Activated T-helper 1 cell treated with anti-CD3 and anti-CD28 coated beads, Interleukin-12 subunit alpha, Interleukin-12 subunit beta, Interleukin-2, Interleukin-4 antibody, amounts not matched to agents 30 ng/mL and 10 ng/mL and 1 ng/mL, durations not matched to agents 14 hours and 24 hours and 36 hours (primary cell): ENCODE measurements at regions of chr1 and their contacts with region 1.

Region 1: DNA sequence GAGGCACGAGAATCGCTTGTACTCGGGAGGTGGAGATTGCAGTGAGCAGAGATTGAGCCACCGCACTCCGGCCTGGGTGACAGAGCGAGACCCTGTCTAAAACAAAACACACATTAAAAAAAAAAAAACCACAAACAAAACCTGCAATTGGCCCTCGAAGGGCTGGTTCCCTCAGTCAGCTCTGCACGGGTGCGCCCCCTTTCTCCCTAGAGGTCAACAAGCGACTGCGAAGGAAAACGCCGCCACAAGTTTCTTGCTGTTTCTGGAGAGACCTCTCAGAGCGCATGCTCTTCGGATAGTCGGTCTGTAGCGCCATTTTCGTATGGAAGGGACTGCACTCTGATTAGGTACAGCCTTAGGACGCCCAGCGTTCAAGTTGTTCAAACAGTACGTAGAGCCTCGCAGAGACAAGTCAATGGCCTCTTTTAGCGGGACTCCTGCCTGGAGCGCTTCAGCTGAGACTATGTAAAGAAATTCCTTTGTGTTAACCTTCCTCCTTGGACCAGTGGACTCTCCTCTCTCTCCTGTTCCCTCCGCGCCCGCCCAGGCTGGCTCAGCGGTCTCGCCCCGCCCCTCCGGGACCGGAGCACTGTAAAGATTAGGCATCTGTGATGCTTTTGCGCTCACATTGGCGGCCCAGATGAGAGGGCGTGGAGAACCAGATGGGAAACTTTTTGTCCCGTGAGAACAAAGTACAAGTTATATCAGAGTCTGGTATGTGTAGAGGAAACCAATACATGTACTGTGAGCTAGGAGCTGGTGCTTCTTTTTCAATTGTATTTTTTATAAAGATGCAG is 1.0 kb upstream of the CDC14A start:
- DNase-seq: peak; percentile 85
- H3K4me3 Mint-ChIP-seq: peak overlapping the region; percentile 93
- H3K27ac Mint-ChIP-seq: peak overlapping the region; percentile 99
- H3K4me1 Mint-ChIP-seq: peaks cover 42% of the 10 kb centered on the region
- H3K27me3 Mint-ChIP-seq: peaks cover 2% of the 10 kb centered on the region

Region 2: DNA sequence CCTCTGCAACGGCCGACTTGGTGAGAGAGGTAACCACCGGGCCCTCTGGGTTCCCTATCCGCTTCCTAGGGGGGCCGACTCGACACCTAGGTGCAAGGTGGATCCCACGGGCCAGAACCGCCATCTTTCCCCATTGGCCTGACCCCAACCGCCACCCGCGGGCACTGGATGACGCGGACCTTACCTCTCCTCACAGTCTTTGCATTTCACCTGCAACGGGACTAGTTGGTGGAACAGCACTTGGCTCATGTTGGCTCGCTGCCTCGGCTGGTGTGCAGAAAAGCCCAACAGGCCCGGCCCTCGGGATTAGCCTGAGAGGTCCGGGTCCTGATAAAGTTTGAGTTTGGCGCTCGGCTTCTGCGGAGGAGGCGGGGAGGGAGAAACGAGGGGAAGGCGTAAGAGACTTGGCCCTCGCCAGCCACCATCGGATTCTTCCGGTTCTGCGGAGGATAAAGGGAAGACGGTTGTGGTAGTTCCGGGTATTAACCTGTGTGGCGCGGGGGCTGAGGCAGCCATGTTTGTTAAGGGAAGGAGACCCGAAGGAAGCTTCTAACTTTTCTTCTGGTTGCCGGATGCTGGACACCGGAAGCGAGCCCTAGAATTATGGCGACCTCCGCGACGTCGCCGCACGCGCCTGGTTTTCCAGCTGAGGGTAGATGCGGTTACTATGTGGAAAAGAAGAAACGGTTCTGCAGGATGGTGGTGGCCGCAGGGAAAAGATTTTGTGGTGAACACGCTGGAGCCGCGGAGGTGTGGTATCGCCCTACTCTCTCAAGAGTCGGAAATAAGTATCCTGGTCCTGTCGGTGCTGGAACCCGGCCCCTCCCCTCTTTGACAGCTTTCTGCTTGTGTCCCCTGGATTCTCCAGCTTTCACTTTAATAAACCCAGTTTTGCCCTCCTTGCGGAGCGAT is 218.5 kb before region 1 on chr1 and contains the starts of genes SASS6 and TRMT13:
- intact Hi-C with region 1: loop called (anchors 1 kb)
- DNase-seq: peak; percentile 93
- H3K4me3 Mint-ChIP-seq: peak within 1 kb of the TSS; percentile 99
- H3K27ac Mint-ChIP-seq: peak within 1 kb of the TSS; percentile 98
- H3K4me1 Mint-ChIP-seq: peaks cover 56% of the 10 kb centered on the region
- H3K27me3 Mint-ChIP-seq: no peaks in the 10 kb centered on the region
- total RNA-seq, gene SASS6: 16.4 and 16.7 TPM in 2 replicates
- total RNA-seq, gene TRMT13: 21.8 and 25.0 TPM in 2 replicates

Region 3: DNA sequence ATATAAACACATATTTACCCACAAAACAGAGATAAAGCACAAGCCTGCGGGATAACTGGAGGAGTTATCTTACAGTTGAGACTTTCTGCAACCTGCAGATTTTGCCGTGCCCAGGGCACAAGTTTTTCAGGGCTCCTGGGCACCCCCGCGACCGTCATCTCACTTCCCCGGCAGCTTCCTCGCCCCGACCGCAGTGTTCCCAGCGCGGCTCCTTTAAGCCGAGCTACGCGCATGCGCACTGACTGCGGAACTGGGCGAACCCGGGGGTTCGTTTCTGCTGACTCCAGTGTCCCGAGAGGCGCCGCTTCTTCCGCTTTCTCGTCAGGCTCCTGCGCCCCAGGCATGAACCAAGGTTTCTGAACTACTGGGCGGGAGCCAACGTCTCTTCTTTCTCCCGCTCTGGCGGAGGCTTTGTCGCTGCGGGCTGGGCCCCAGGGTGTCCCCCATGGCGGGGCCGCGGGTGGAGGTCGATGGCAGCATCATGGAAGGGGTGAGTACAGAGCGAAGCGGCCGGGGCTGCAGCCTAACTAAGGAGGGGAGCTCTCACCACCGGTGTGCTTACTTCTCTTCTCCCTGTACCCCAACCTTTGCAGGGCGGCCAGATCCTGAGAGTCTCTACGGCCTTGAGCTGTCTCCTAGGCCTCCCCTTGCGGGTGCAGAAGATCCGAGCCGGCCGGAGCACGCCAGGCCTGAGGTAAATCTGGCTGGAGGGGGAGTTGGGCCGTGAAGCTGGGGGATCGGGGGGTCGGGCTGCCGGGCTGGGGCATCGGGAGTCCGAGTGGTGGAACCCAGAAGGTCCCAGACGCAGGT is 85.2 kb before region 1 on chr1 and contains the start of gene RTCA:
- intact Hi-C with region 1: loop called (anchors 1 kb)
- DNase-seq: peak; percentile 94
- H3K4me3 Mint-ChIP-seq: peak within 1 kb of the TSS; percentile 100
- H3K27ac Mint-ChIP-seq: peak within 1 kb of the TSS; percentile 100
- H3K4me1 Mint-ChIP-seq: peaks cover 50% of the 10 kb centered on the region
- H3K27me3 Mint-ChIP-seq: peaks cover 4% of the 10 kb centered on the region
- total RNA-seq, gene RTCA: 48.1 and 52.0 TPM in 2 replicates

Region 4: GRCh38 chr1:100292711-100293110 is 58.6 kb before region 1 on chr1:
- intact Hi-C with region 1: loop called (anchors 2 kb)
- DNase-seq: no peak
- H3K4me3 Mint-ChIP-seq: no peak overlapping the region
- H3K27ac Mint-ChIP-seq: no peak overlapping the region
- H3K4me1 Mint-ChIP-seq: no peaks in the 10 kb centered on the region
- H3K27me3 Mint-ChIP-seq: no peaks in the 10 kb centered on the region

Region 5: GRCh38 chr1:100362821-100363466 is 11.7 kb after region 1 on chr1:
- intact Hi-C with region 1: no loop called
- DNase-seq: no peak
- H3K4me3 Mint-ChIP-seq: no peak overlapping the region
- H3K27ac Mint-ChIP-seq: no peak overlapping the region
- H3K4me1 Mint-ChIP-seq: peaks cover 43% of the 10 kb centered on the region
- H3K27me3 Mint-ChIP-seq: no peaks in the 10 kb centered on the region

Region 6: GRCh38 chr1:100400404-100400803 is 49.1 kb after region 1 on chr1:
- intact Hi-C with region 1: loop called (anchors 1 kb)
- DNase-seq: peak; percentile 58
- H3K4me3 Mint-ChIP-seq: peak overlapping the region; percentile 77
- H3K27ac Mint-ChIP-seq: peak overlapping the region; percentile 94
- H3K4me1 Mint-ChIP-seq: peaks cover 79% of the 10 kb centered on the region
- H3K27me3 Mint-ChIP-seq: no peaks in the 10 kb centered on the region

Region 7: DNA sequence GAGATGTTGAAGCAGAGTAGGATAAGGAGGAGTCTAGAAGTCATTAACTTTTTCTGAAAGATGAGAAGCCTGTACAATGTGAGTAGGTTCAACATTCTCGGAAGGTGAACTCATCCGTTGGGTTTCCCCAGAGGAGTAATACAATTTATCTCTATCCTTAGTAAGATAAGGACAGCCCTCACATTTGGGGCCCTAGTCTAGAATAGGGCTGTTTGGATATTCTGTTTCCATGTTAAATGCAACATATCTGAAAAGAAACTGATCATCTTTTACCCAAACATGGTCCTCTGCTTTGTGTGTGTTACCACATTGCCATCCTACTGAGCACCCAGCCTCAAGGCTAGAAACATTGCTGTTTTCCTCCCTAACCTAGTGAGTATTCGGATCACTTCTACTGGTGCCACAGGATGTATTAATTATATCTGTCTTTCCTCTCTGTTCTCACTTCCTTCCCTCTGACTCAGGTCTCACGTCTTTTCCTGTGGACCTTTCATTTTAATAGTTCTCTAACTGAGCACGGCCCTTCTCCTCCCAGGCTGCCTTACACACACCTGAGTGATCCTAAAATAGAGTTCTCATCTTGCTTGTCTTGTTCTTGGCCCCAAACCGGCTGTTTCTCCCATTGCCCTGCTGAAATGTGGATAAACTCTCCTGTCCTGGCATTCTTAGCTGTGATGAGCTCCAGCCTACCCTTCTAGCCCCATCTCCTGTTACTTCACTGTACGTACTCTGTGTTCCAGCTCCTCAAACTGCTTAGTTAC is 92.7 kb after region 1 on chr1:
- intact Hi-C with region 1: loop called (anchors 1 kb)
- DNase-seq: peak; percentile 22
- H3K4me3 Mint-ChIP-seq: peak overlapping the region; percentile 61
- H3K27ac Mint-ChIP-seq: peak overlapping the region; percentile 95
- H3K4me1 Mint-ChIP-seq: peaks cover 91% of the 10 kb centered on the region
- H3K27me3 Mint-ChIP-seq: no peaks in the 10 kb centered on the region

Region 8: GRCh38 chr1:100895540-100896483 is 544.5 kb after region 1 on chr1 and contains the start of gene SLC30A7:
- intact Hi-C with region 1: loop called (anchors 1 kb)
- DNase-seq: peak; percentile 95
- H3K4me3 Mint-ChIP-seq: peak within 1 kb of the TSS; percentile 93
- H3K27ac Mint-ChIP-seq: peak within 1 kb of the TSS; percentile 96
- H3K4me1 Mint-ChIP-seq: peaks cover 64% of the 10 kb centered on the region
- H3K27me3 Mint-ChIP-seq: no peaks in the 10 kb centered on the region
- total RNA-seq, gene SLC30A7: 42.6 and 51.2 TPM in 2 replicates